Mucosa of descending colon (tissue), 3 donors: ENCODE measurements at regions of chr11 and their contacts with region 1.

Region 1: DNA sequence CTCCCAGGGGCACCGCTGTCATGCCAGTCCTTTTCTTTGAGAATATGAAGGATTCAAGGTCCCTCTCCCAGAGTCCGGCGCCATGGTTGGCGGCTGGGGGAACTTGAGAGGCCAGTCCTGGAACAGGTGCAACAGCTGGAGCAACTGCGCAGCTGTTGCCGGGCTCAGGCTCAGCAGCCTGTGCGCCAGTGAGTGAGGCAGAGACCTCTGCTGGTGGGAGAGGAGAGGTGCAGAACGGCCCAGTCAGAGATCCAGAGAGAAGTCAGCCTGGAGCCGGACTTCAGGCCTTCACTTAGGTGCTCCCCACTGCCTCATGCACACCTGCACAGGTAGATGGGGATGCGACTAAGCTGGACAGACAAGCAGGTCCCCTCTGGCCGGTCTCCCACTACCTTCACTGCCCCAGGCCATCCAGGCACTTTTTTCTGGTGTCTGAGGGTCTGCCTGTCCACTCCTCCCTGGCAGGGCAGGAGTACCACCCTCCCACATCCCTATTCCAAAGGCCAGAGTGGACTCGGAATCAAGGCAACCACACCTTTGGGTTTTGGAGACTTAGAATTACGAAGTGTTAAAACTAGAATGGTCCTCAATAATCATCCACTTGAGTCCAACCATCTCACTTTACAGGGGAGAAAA is 4.6 kb downstream of the CHRDL2 start:
- DNase-seq: peak; percentile 69 to 79 (median 74)
- ATAC-seq: peak; percentile 97
- H3K4me3 ChIP-seq: no peak overlapping the region
- H3K4me1 ChIP-seq: peaks cover 6% of the 10 kb centered on the region
- CTCF ChIP-seq: peak; percentile 78

Region 2: GRCh38 chr11:74611369-74611861 is 115.2 kb before region 1 on chr11:
- intact Hi-C with region 1: loop called in 1 of 2 experiments (anchors 5 kb)
- DNase-seq: no peak
- ATAC-seq: peak; percentile 65
- H3K4me3 ChIP-seq: no peak overlapping the region
- H3K4me1 ChIP-seq: no peaks in the 10 kb centered on the region
- CTCF ChIP-seq: no peak